Activated CD4-positive, alpha-beta T cell treated with anti-CD3 and anti-CD28 coated beads for 36 hours (primary cell): ENCODE measurements at regions of chr2 and their contacts with region 1.

Region 1: DNA sequence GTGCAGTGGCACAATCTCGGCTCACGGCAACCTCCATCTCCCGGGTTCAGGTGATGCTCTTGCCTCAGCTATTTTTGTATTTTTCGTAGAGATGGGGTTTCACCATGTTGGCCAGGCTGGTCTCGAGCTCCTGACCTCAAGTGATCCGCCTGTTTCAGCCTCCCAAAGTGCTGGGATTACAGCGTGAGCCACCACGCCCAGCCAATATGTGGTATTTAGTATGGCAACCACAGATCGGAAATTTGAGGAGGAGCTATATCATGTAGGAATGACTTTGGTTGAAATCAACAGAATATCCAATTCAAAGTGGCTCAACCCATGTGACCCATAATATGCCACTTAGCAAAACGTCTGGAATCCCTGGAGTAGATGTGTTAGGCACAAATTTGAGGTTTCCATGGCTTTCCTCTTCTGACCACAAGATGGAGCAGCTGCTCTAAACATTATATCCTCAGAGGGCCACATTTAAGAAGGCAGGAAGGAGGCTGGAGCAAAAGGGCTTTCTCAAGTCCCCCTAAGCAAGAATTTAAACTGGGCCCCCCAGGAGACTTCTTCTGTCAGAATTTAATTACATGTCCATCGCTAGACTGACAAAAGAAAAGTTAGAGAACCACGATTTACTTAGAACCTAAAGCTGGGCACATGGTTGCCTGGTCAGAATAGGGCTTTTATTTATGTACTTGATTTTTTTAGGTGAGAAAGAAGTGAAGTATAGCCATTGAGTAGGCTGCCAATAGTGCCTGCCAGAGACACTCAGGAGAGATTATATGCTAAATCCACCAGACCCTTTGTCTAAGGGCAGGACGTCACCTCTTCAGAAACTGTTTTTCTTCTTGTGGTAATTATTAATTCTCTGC is 49.6 kb upstream of the ITSN2 start:
- DNase-seq: peak; percentile 37
- ATAC-seq: peak; percentile 86
- H3K4me3 Mint-ChIP-seq: no peak overlapping the region
- H3K27ac Mint-ChIP-seq: no peak overlapping the region
- H3K4me1 Mint-ChIP-seq: no peaks in the 10 kb centered on the region
- H3K27me3 Mint-ChIP-seq: peaks cover 7% of the 10 kb centered on the region

Region 2: DNA sequence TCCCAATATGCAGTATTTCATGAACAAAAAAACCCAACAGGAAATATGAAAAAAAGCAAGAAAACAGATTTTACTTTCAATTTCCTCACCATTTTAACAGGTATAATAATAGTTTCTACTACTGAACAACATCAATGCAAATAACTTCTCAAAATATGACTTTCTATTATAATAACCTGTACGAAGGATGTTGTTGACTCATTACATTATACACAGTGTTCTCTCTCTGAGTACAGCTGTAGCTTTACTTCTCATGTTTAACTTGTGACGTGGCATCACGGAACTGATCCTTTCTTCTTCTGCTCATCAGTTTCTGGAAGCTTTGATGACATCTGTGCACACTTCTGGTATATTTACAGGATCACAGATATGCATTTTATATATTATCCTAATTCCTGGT is 195.0 kb before region 1 on chr2:
- CTCF ChIA-PET with region 1: no interaction called
- POLR2A ChIA-PET with region 1: no interaction called
- intact Hi-C with region 1: no loop called
- DNase-seq: peak; percentile 18
- ATAC-seq: peak; percentile 96
- H3K4me3 Mint-ChIP-seq: no peak overlapping the region
- H3K27ac Mint-ChIP-seq: no peak overlapping the region
- H3K4me1 Mint-ChIP-seq: peaks cover 3% of the 10 kb centered on the region
- H3K27me3 Mint-ChIP-seq: no peaks in the 10 kb centered on the region

Region 3: DNA sequence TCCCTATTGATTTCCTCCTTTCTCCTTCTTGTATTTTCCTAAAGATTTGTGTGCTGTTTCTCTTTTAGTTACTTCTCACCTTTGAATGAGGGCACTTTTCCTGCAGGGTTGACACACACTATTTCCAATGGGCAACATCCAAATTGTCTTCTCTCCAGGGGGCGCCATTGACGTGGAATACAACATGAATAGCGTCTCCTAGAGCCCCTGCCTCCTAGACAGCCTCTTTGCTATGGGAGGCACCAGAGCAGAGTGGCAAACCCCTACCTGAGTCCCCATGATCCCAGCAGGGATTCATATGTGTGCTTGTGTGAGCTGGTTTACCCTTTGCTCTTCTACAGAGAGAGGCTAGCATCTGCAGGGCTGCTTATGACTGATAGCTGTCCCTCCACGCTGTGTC is 11.7 kb after region 1 on chr2:
- CTCF ChIA-PET with region 1: interaction called, 45 read pairs
- POLR2A ChIA-PET with region 1: no interaction called
- intact Hi-C with region 1: no loop called
- DNase-seq: peak; percentile 80
- ATAC-seq: peak; percentile 81
- H3K4me3 Mint-ChIP-seq: no peak overlapping the region
- H3K27ac Mint-ChIP-seq: no peak overlapping the region
- H3K4me1 Mint-ChIP-seq: no peaks in the 10 kb centered on the region
- H3K27me3 Mint-ChIP-seq: no peaks in the 10 kb centered on the region

Region 4: GRCh38 chr2:24456599-24457556 is 47.0 kb after region 1 on chr2:
- CTCF ChIA-PET with region 1: no interaction called
- POLR2A ChIA-PET with region 1: no interaction called
- intact Hi-C with region 1: no loop called
- DNase-seq: peak; percentile 53
- ATAC-seq: peak; percentile 94
- H3K4me3 Mint-ChIP-seq: no peak overlapping the region
- H3K27ac Mint-ChIP-seq: no peak overlapping the region
- H3K4me1 Mint-ChIP-seq: peaks cover 8% of the 10 kb centered on the region
- H3K27me3 Mint-ChIP-seq: peaks cover 4% of the 10 kb centered on the region

Region 5: DNA sequence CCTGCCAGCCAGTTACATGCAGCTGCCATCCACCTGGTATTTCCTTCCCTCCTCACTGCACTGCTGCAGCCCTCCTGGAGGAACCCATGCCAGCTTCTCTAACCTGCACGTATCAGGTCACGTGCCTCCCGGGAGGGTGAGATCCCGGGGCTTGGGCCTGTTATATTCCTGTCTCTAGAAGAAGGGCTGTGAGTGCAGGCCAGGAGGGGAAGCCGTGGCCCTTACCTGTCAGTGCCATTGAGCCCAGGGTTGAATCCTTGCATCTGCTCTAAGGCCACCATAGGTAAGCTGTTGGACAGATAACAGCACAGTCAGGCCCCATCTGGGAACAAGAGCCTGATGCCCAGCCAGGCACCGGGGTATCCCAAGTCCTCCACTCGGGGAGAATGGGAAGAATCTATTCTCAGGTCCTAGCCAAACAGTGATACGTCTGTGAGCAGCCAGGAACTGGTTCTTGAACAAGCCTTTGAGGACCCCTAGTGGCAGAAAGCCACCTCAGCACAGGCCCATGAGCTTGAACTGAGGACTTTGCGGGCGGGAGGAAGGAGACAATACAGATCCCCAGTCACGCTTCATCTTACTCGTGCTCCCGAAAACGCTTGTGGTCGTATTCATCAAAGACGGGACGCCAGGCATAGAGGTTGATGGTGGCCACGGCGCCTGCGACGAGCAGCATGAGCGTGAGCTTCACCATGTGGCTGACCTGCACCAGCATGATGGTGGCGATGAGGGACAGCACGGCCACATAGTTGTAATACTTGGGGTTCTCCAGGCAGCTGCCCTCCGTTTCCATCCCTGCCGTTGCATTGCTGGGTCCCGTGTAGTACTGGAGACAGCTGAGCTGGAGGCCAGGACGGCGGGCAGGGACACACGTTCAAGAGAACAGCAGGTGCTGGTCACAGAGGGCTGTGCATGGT is 417.7 kb after region 1 on chr2:
- CTCF ChIA-PET with region 1: interaction called, 67 read pairs
- POLR2A ChIA-PET with region 1: no interaction called
- intact Hi-C with region 1: loop called (anchors 1 kb)
- DNase-seq: peak; percentile 84
- ATAC-seq: peak; percentile 85
- H3K4me3 Mint-ChIP-seq: no peak overlapping the region
- H3K27ac Mint-ChIP-seq: no peak overlapping the region
- H3K4me1 Mint-ChIP-seq: peaks cover 20% of the 10 kb centered on the region
- H3K27me3 Mint-ChIP-seq: no peaks in the 10 kb centered on the region

Region 6: DNA sequence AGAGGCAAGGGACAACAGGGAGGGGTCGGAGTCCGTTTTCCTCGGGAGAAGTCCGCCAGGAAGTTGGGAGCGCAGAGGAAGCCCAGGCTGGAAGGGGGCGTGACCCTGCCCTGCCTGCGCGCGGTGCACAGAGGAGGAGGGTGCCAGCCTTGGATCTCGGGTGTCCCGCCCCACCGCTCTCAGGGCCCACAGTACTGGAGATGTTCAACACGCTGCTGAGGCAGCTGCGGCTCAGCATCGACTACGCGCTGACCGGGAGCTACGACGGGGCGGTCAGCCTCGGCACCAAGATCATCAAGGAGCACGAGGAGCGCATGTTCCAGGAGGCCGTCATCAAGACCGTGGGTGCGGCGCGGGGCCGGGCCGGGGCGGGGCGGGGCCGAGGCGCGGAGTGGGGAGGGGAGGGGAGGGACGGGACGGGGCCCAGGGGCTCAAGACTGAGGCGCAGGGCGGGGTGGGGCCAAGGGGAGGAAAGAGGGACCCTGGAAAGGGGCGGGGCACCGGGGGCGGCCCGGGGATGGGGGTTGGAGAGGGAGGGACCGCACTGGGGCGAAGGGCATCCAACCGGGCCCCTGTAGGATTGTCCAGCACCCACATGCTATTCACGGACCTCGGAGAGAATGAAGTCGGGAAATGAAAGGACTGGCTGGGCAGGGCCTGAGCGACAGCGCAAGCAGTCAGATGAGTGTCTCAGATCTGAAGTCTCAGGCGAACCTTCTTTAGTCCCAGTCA is 721.8 kb after region 1 on chr2:
- CTCF ChIA-PET with region 1: interaction called, 3 read pairs
- POLR2A ChIA-PET with region 1: no interaction called
- intact Hi-C with region 1: loop called (anchors 1 to 10 kb)
- DNase-seq: peak; percentile 39
- ATAC-seq: peak; percentile 47
- H3K4me3 Mint-ChIP-seq: peak overlapping the region; percentile 38
- H3K27ac Mint-ChIP-seq: no peak overlapping the region
- H3K4me1 Mint-ChIP-seq: peaks cover 11% of the 10 kb centered on the region
- H3K27me3 Mint-ChIP-seq: peaks cover 47% of the 10 kb centered on the region

Region 7: DNA sequence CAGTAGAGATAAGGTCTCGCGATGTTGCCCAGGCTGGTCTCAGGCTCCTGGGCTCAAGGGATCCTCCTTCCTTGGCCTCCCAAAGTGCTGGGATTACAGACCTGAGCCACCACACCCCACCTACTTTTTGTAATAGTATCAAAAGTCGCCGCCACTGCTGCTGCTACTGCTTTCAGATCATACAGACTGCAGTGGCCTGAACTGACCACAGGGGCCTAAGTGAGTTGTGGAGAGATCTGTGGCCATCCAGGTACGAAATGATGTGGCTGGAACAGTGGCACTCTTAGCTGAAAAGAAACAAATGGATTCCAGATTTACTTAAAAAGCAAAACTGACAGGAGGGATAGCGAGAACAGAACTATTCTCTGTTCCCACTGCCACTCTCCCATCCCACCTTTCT is 791.3 kb after region 1 on chr2:
- CTCF ChIA-PET with region 1: interaction called, 5 read pairs
- POLR2A ChIA-PET with region 1: no interaction called
- intact Hi-C with region 1: loop called in 1 of 2 experiments (anchors 1 kb)
- DNase-seq: no peak
- ATAC-seq: no peak
- H3K4me3 Mint-ChIP-seq: no peak overlapping the region
- H3K27ac Mint-ChIP-seq: no peak overlapping the region
- H3K4me1 Mint-ChIP-seq: peaks cover 9% of the 10 kb centered on the region
- H3K27me3 Mint-ChIP-seq: no peaks in the 10 kb centered on the region